ENCODE measurements at regions of chr20 and their contacts with region 1.

Region 1: GRCh38 chr20:22127587-22127986 is 422.1 kb downstream of the PAX1 start:
- DNase-seq: no peak
- H3K4me3 ChIP-seq: no peak overlapping the region
- H3K27ac ChIP-seq: no peak overlapping the region
- H3K4me1 ChIP-seq: no peaks in the 10 kb centered on the region
- H3K27me3 ChIP-seq: no peaks in the 10 kb centered on the region
- CTCF ChIP-seq: no peak
- EP300 ChIP-seq: no peak
- POLR2A ChIP-seq: no peak

Region 2: GRCh38 chr20:22248051-22248667 is 120.6 kb after region 1 on chr20:
- in situ Hi-C with region 1: loop called in 1 of 4 experiments (anchors 25 kb)
- intact Hi-C with region 1: no loop called
- DNase-seq: no peak
- H3K4me3 ChIP-seq: no peak overlapping the region
- H3K27ac ChIP-seq: no peak overlapping the region
- H3K4me1 ChIP-seq: no peaks in the 10 kb centered on the region
- H3K27me3 ChIP-seq: no peaks in the 10 kb centered on the region
- CTCF ChIP-seq: peak in 3 of 5 experiments; percentile 18 to 33 (median 23)
- EP300 ChIP-seq: no peak
- POLR2A ChIP-seq: no peak